Activated CD8-positive, alpha-beta T cell treated with anti-CD3 and anti-CD28 coated beads, Interleukin-2, amount 10 ng/mL, durations not matched to agents 7 days and 5 days (primary cell): ENCODE measurements at regions of chr10 and their contacts with region 1.

Region 1: DNA sequence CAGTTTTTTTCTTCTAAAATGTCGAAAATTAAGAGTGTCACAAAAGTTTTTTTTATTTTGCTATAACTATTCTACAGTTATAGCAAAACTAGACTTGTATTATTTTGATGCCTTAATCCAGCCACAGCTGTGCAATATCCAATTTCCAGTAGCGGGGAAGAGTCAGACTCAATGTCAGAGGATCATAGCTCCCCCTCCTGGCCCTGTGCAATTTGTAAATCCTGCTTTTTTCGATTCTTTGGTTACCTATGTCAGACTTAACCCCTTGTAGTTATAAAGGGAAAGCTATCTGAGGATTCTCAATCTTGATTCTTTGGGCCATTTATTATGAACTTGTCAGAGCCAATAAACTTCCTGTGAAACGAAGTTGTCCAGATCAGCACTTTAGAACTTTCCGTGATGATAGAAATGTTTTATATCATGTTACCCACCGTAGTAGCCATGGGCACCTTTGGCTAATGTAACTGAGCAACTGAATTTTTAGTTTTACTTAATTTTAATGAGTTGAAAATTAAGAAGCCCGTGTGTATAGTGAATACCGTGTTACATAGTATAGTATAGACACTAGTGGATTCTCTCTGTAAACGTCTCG is 87.7 kb upstream of the PRKCQ start:
- DNase-seq: peak; percentile 70
- ATAC-seq: no peak
- H3K4me3 Mint-ChIP-seq: no peak overlapping the region
- H3K27ac Mint-ChIP-seq: no peak overlapping the region
- H3K4me1 Mint-ChIP-seq: peaks cover 32% of the 10 kb centered on the region
- H3K27me3 Mint-ChIP-seq: peaks cover 5% of the 10 kb centered on the region

Region 2: DNA sequence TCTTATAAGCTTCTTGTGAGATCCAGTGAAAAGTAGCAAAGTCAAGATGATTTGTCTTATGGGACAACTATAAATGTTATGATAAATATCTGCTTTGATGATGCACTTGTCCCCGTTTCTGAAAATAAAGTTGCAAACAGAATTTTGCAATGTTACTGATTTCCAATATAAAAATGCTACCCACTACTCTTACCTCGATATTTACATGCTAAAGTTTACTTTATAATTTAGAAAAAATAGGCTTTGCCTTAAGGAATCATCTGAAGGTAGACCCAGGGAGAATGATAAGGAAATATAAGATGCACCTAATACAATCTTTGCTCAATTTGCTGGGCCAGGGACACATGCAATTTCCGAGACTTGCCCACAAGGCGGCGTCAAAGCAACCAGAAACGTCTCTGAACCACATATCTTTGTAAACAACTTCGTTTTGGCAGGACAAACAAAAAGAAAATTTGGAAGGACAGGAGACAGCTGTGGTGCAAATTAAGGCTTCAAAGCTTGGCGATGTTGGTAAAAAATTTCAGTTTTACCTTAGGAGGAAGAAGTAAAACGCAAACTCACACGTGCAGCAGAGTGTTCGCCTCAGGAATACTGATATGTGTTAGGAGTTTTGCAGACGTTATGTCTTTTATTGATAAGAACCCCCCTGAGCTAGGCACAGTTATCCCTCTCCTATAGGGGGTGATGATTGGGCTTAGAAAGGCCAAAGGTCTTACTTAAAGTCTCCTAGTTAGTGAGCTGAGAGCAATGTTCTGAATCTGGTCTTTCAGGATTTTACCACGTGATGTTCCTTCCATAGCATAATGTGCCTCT is 222.1 kb before region 1 on chr10:
- CTCF ChIA-PET with region 1: interaction called, 25 read pairs
- POLR2A ChIA-PET with region 1: no interaction called
- DNase-seq: peak; percentile 80
- ATAC-seq: peak; percentile 67
- H3K4me3 Mint-ChIP-seq: no peak overlapping the region
- H3K27ac Mint-ChIP-seq: peak overlapping the region; percentile 0
- H3K4me1 Mint-ChIP-seq: peaks cover 39% of the 10 kb centered on the region
- H3K27me3 Mint-ChIP-seq: no peaks in the 10 kb centered on the region

Region 3: GRCh38 chr10:6530211-6530840 is 137.4 kb before region 1 on chr10:
- CTCF ChIA-PET with region 1: interaction called, 13 read pairs
- POLR2A ChIA-PET with region 1: no interaction called
- DNase-seq: peak; percentile 93
- ATAC-seq: peak; percentile 98
- H3K4me3 Mint-ChIP-seq: peak overlapping the region; percentile 77
- H3K27ac Mint-ChIP-seq: peak overlapping the region; percentile 98
- H3K4me1 Mint-ChIP-seq: peaks cover 85% of the 10 kb centered on the region
- H3K27me3 Mint-ChIP-seq: no peaks in the 10 kb centered on the region

Region 4: GRCh38 chr10:6607778-6608177 is 60.0 kb before region 1 on chr10:
- CTCF ChIA-PET with region 1: interaction called, 36 read pairs
- POLR2A ChIA-PET with region 1: no interaction called
- DNase-seq: no peak
- ATAC-seq: no peak
- H3K4me3 Mint-ChIP-seq: no peak overlapping the region
- H3K27ac Mint-ChIP-seq: peak overlapping the region; percentile 87
- H3K4me1 Mint-ChIP-seq: peaks cover 78% of the 10 kb centered on the region
- H3K27me3 Mint-ChIP-seq: no peaks in the 10 kb centered on the region

Region 5: DNA sequence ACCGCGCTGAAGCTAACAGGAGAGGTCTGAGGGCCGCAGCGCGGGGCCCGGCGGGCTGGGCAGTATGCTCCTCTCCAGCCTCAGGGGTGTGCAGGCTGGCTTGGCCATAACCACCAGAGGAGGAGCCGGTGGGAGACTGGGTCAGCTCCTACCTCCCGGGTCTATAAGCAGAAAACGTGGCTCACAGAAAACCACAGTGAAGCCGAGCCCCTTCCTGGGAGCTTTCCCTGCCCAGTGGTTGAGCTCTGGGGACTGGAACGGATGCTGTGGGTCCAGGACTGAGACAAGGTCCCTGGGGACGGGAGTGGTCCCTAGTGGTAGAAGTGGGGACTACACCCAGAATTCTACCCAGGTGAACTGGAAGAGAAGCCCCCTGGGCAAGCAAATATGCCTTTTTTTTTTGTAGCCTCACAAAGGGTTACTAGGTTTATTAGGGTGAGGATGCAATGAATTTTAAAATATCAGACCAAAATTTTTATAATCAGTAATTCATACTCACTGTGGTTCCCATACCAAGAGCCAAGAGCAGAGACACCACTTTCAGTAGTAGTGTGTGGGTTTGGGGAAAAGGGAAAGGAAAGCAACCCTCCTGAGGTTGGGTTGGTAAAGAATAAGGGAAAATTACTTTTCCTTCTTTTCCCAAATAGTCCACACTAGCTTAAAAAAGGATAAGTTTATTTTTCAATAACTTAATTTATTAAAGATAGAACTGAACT is 19.8 kb before region 1 on chr10:
- CTCF ChIA-PET with region 1: interaction called, 15 read pairs
- POLR2A ChIA-PET with region 1: interaction called, 5 read pairs
- DNase-seq: peak; percentile 84
- ATAC-seq: peak; percentile 88
- H3K4me3 Mint-ChIP-seq: no peak overlapping the region
- H3K27ac Mint-ChIP-seq: peak overlapping the region; percentile 46
- H3K4me1 Mint-ChIP-seq: peaks cover 48% of the 10 kb centered on the region
- H3K27me3 Mint-ChIP-seq: peaks cover 5% of the 10 kb centered on the region